HAP-1 (cell line): ENCODE measurements at regions of chr14 and their contacts with region 1.

Region 1: DNA sequence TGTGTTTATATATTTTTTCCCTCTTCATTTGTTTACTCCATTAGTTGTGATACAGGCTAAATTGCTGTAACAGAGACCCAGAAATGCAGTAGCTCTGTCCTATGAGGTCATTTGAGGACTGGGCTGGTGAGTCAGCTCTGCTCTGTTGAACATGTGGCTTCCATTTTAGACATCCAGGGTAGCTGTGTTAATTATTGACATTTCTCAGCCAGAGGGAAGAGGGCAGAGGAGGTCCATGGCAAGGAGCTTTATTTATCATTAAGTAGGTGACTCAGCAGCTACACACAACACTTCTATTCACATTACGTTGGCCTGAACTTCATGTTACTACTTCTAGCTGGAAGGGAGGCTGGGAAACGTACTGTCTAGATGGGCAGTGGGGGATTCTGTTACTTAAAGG is 85.4 kb downstream of the PTCSC3 start:
- DNase-seq: no peak
- H3K4me3 ChIP-seq: no peak overlapping the region
- H3K4me1 ChIP-seq: no peaks in the 10 kb centered on the region
- H3K27me3 ChIP-seq: peaks cover 7% of the 10 kb centered on the region

Region 2: GRCh38 chr14:35909665-35910064 is 181.4 kb before region 1 on chr14:
- in situ Hi-C with region 1: no loop called
- DNase-seq: no peak
- H3K4me3 ChIP-seq: no peak overlapping the region
- H3K4me1 ChIP-seq: no peaks in the 10 kb centered on the region
- H3K27me3 ChIP-seq: no peaks in the 10 kb centered on the region

Region 3: GRCh38 chr14:36207500-36207899 is 116.4 kb after region 1 on chr14:
- in situ Hi-C with region 1: no loop called
- DNase-seq: peak in 1 of 2 experiments; percentile 54
- H3K4me3 ChIP-seq: no peak overlapping the region
- H3K4me1 ChIP-seq: no peaks in the 10 kb centered on the region
- H3K27me3 ChIP-seq: peaks cover 17% of the 10 kb centered on the region

Region 4: GRCh38 chr14:36524874-36525745 is 434.0 kb after region 1 on chr14:
- in situ Hi-C with region 1: loop called (anchors 25 kb)
- DNase-seq: peak; percentile 59 to 87
- H3K4me3 ChIP-seq: no peak overlapping the region
- H3K4me1 ChIP-seq: peaks cover 5% of the 10 kb centered on the region
- H3K27me3 ChIP-seq: no peaks in the 10 kb centered on the region